Lower leg skin (tissue), 4 donors: ENCODE measurements at regions of chr22 and their contacts with region 1.

Region 1: DNA sequence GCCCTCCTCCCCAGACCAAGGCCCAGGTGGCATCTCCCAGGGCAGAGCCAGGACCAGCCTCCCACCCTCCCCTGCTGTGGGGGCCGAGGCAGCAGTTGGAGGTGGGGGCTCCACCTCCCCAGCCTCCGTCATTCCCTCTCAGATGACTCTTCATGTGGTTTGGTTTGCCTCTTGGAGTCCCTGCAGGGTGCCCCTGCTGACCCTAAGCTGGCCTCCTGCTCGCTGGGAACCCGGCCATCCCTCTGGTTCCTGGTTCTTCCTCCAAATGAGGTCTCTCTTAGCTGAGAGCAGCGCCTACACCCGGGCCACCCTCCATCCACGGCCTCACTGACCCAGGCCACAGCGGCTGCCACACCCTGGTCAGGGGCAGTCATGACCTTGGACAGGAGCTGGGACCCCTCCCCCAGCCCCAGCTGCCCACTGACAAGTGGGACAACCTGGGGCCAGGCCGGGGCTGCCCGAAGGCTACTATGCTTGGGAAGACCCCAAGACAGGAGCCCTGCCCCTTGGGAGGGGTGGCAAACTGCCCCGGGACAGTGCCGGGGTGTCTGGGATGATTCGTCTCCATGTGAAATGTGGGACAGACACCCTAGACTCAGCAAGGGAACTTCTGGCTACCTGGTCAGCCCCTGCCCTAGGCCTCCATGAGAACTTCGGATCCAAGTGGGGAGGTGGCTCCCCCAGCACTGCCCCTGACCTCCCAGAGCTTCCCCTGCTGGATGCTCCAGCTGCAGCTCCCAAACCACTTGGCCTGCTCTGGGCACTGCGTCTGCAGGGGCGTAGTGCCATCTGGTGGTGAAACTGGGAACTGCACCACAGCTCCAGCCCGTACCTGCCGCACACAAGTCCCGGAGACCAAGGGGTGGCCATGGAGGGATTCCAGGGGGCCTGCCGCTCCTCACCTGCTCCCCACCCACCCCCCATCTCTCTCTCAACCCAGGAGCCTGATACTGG is 194.5 kb downstream of the IGLL1 start:
- DNase-seq: peak; percentile 78 to 97
- H3K4me3 ChIP-seq: no peak overlapping the region
- CTCF ChIP-seq: peak in 1 of 3 donors; percentile 88
- POLR2A ChIP-seq: no peak

Region 2: DNA sequence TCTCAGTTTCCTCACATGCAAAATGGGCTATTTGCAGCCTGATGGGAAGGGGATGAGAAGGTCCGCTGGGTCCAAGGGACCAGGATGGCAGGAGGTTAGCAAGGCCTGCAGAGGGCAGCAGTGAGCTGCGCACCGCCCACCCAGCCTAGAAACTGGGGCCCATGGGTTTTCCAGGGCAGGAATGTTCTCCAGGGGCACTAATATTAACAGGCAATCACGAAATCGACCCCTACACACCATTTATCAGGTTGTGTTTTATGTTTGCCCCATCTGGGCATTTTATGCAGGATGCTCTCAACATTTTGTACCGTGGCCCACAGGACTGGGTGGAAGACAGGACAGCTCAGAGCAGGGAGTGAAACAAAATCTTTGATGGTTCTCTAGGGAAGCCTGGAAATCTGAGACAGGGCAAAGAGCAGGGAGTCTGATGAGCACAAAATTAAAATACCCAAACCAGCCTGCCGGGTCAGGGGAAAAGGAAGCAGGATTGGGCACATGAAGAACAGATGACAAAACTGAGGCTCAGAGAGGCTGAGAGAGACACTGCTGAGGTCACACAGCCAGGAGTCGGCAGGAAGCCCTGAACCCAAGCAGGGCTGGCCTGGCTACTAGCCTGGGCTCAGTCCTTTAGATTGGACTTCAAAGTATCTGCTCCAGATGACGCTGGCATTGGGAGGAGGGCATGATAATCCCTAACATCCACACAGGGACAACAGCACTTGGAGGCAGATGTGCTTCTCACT is 206.9 kb before region 1 on chr22:
- intact Hi-C with region 1: loop called (anchors 5 kb)
- DNase-seq: peak; percentile 37 to 92
- H3K4me3 ChIP-seq: no peak overlapping the region
- CTCF ChIP-seq: peak in 1 of 3 donors; percentile 91
- POLR2A ChIP-seq: no peak

Region 3: GRCh38 chr22:23315341-23315917 is 70.1 kb before region 1 on chr22:
- intact Hi-C with region 1: loop called (anchors 10 kb)
- DNase-seq: peak in 1 of 2 donors; percentile 94
- H3K4me3 ChIP-seq: no peak overlapping the region
- CTCF ChIP-seq: peak in 1 of 3 donors; percentile 32
- POLR2A ChIP-seq: no peak

Region 4: DNA sequence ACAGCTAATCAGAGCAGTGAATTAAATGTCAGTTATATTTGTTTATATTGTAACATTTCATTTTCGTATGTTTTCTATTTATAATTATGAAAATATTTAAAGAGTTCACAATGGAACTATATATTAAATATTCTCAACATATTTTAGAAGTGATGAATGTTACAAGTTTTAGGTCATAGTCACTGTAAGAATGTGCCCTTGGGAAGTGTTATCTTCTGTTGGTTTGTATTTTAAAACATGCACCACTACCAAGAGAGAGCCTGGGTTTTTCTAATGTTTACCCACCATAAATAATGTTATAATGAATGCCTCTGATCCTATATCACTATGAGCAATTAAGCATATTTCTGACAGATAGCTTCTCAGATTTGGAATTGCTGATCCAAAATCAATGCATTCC is 34.2 kb before region 1 on chr22:
- intact Hi-C with region 1: no loop called
- DNase-seq: no peak
- H3K4me3 ChIP-seq: no peak overlapping the region
- CTCF ChIP-seq: no peak
- POLR2A ChIP-seq: no peak

Region 5: GRCh38 chr22:23539135-23539838 is 153.7 kb after region 1 on chr22:
- intact Hi-C with region 1: loop called (anchors 10 kb)
- DNase-seq: peak; percentile 79 to 94
- H3K4me3 ChIP-seq: no peak overlapping the region
- CTCF ChIP-seq: peak in 1 of 3 donors; percentile 69
- POLR2A ChIP-seq: no peak